Activated T-helper 1 cell treated with anti-CD3 and anti-CD28 coated beads, Interleukin-12 subunit alpha, Interleukin-12 subunit beta, Interleukin-2, Interleukin-4 antibody, amounts not matched to agents 30 ng/mL and 10 ng/mL and 1 ng/mL, durations not matched to agents 14 hours and 24 hours and 36 hours (primary cell): ENCODE measurements at regions of chr6 and their contacts with region 1.

Region 1: GRCh38 chr6:142155895-142156757 is 9.1 kb downstream of the VTA1 start:
- DNase-seq: no peak
- H3K4me3 Mint-ChIP-seq: no peak overlapping the region
- H3K27ac Mint-ChIP-seq: no peak overlapping the region
- H3K4me1 Mint-ChIP-seq: peaks cover 19% of the 10 kb centered on the region
- H3K27me3 Mint-ChIP-seq: no peaks in the 10 kb centered on the region

Region 2: GRCh38 chr6:142207265-142207877 is 51.2 kb after region 1 on chr6:
- intact Hi-C with region 1: loop called (anchors 1 kb)
- DNase-seq: peak; percentile 6
- H3K4me3 Mint-ChIP-seq: no peak overlapping the region
- H3K27ac Mint-ChIP-seq: no peak overlapping the region
- H3K4me1 Mint-ChIP-seq: no peaks in the 10 kb centered on the region
- H3K27me3 Mint-ChIP-seq: no peaks in the 10 kb centered on the region

Region 3: DNA sequence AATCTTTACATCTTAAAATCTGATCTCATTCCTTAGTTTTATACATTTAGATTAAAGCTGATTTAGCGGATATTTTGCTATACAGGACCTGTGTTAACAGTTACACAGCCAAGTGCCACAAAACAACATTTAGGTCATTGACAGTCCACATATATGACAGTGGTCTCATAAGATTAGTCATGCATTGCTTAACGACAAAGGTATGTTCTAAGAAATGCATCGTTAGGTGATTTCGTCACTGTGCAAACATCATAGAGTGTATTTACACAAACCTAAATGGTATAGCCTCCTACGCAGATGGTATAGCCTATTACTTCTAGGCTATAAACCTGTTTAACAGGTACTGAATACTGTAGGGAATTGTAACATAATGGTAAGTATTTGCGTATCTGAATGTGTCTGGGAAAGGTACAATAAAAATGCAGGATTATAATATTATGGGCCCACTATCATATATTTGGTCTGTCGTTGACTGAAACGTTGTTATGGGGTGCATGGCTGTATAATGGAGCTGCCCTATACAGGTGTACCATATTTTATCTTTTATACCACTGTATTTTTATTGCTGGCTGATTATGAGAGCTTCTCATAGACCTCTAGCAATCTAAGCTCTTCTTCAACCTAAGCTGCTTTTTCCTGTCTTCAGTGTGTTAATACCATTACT is 167.4 kb after region 1 on chr6:
- intact Hi-C with region 1: no loop called
- DNase-seq: no peak
- H3K4me3 Mint-ChIP-seq: no peak overlapping the region
- H3K27ac Mint-ChIP-seq: no peak overlapping the region
- H3K4me1 Mint-ChIP-seq: no peaks in the 10 kb centered on the region
- H3K27me3 Mint-ChIP-seq: peaks cover 5% of the 10 kb centered on the region

Region 4: DNA sequence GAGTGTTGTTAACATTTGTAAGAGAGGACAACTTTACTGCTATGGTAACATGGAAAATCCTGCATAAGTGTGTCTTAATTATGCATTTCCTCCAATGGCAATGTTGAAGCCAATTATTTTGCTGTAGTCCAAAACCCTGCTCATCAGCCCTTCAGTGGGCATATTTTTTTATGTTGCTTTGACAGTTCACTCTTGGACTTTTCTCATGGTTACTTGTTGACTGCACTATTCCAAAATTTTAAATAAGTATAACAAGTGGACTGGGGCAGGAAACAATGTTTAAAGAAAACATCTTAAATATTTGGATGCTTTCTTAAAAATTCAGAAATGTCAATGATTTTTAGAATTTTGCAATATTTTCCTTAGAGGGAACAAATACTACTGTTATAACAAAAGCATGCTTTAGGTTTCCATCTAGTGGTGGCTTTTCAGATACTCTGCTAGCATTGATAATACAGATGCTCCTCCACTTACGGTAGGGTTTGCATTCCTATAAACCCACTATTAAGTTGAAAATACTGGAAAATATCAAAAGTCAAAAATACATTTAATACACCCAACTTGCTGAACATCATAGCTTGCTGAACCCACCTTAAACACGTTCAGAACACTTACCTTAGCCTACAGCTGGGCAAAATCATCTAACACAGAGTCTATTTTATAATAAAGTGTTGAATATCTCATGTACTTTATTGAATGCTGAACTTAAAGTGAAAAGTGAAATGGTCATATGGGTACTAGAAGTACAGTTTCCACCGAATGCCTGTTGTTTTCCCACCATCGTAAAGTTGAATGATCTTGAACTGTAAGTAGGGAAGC is 232.1 kb after region 1 on chr6:
- intact Hi-C with region 1: loop called (anchors 1 kb)
- DNase-seq: no peak
- H3K4me3 Mint-ChIP-seq: no peak overlapping the region
- H3K27ac Mint-ChIP-seq: no peak overlapping the region
- H3K4me1 Mint-ChIP-seq: no peaks in the 10 kb centered on the region
- H3K27me3 Mint-ChIP-seq: peaks cover 46% of the 10 kb centered on the region

Region 5: DNA sequence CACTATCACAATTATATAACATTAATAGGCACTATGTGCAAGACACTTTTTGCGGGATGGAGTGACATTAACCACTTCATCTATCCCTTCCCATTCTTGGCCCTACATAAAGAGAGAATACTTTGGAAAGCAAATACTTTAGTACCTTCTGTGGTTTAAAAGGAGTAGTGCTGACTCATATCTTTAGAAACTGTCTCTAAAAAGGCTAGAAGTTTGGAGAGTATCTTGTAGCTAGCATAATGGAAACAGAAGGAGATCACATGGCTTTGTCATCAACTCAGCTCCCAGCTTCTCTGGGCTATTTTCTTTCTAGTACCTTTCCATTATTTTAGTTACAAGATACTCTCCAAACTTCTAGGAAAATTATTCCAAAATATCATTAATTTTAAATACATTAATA is 303.1 kb after region 1 on chr6:
- intact Hi-C with region 1: no loop called
- DNase-seq: no peak
- H3K4me3 Mint-ChIP-seq: no peak overlapping the region
- H3K27ac Mint-ChIP-seq: no peak overlapping the region
- H3K4me1 Mint-ChIP-seq: no peaks in the 10 kb centered on the region
- H3K27me3 Mint-ChIP-seq: peaks cover 3% of the 10 kb centered on the region